BJ (cell line): ENCODE measurements at regions of chr22 and their contacts with region 1.

Region 1: DNA sequence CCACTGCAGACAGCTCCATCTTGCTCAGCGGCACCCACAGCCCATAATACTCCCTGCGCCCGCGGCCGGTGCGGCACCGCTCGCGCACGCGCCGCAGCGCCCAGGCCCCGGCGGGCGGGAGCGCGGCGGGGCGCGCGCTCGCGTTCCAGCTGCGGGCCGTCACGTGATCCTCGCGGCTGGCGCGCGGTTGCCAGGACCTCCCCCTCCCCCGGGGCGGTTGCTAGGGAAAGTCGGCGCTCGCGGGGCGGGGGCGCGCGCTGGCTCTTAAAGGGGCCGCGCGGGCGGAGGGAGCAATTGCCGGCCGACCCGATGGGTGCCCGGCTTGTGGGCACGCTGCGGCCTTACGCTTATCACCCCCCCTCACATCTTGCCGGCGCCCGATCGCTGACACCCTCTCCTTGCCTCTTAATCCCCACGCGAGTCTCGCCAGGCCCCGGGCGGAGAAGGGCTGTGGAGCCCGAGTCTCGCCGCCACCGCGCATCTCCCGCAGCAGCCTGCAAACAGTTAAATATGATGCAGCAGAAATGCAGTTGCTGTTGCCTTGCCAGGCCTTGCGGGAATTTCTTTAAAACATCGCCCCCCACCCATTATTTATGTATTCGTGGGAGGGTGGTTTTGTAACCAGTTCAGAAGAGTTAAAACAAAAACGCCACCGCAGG is at the start of gene CBX6:
- DNase-seq: no peak
- H3K4me3 ChIP-seq: peak within 1 kb of the TSS; percentile 72
- H3K27me3 ChIP-seq: no peaks in the 10 kb centered on the region
- CTCF ChIP-seq: no peak
- polyA plus RNA-seq, gene CBX6: 15.4 and 21.9 TPM in 2 replicates

Region 2: DNA sequence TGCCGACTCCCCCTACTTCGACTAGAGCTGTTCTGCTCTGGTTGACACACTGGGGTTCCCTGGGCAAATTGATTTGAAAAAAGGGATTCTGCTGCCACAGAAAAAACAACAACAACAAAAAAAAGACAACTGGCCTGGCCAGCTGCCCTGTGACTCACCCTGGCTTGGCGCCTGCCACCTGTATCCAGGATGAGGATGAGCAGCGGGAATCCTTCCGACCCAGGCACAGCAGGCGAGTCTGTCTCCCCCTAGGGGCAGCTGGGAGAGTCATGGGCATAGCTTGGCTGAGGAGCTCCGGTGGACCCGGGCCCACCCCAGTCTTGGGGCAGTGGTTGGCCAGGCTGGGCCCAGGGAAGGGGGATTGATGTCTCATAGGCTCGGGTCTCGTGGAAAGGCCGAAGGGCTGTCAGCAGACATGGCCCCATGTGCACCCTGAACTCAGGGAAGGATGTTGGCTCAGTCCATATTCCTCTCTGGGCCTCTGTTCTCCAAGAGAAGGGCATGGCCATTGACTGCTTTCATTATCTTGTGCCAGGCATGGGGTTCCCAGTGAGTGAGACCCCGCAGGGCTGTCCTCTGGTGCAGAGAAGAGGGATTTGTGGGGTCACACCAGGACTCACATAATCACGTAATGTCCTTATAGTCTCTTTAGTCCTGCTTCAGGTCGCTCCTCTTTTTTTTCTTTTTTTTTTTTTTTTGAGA is 106.1 kb before region 1 on chr22:
- CTCF ChIA-PET with region 1: interaction called, 113 read pairs
- POLR2A ChIA-PET with region 1: no interaction called
- DNase-seq: no peak
- H3K4me3 ChIP-seq: no peak overlapping the region
- H3K27me3 ChIP-seq: 0 out of 2 replicates have a peak, but pooled peaks cover 1% of the 10 kb centered on the region
- CTCF ChIP-seq: peak; percentile 96

Region 3: GRCh38 chr22:38921119-38921518 is 48.8 kb after region 1 on chr22:
- CTCF ChIA-PET with region 1: interaction called, 50 read pairs
- POLR2A ChIA-PET with region 1: no interaction called
- DNase-seq: no peak
- H3K4me3 ChIP-seq: no peak overlapping the region
- H3K27me3 ChIP-seq: peaks cover 7% of the 10 kb centered on the region
- CTCF ChIP-seq: no peak

Region 4: GRCh38 chr22:38941488-38941987 is 69.2 kb after region 1 on chr22:
- CTCF ChIA-PET with region 1: interaction called, 10 read pairs
- POLR2A ChIA-PET with region 1: no interaction called
- DNase-seq: no peak
- H3K4me3 ChIP-seq: no peak overlapping the region
- H3K27me3 ChIP-seq: peaks cover 18% of the 10 kb centered on the region
- CTCF ChIP-seq: no peak

Region 5: DNA sequence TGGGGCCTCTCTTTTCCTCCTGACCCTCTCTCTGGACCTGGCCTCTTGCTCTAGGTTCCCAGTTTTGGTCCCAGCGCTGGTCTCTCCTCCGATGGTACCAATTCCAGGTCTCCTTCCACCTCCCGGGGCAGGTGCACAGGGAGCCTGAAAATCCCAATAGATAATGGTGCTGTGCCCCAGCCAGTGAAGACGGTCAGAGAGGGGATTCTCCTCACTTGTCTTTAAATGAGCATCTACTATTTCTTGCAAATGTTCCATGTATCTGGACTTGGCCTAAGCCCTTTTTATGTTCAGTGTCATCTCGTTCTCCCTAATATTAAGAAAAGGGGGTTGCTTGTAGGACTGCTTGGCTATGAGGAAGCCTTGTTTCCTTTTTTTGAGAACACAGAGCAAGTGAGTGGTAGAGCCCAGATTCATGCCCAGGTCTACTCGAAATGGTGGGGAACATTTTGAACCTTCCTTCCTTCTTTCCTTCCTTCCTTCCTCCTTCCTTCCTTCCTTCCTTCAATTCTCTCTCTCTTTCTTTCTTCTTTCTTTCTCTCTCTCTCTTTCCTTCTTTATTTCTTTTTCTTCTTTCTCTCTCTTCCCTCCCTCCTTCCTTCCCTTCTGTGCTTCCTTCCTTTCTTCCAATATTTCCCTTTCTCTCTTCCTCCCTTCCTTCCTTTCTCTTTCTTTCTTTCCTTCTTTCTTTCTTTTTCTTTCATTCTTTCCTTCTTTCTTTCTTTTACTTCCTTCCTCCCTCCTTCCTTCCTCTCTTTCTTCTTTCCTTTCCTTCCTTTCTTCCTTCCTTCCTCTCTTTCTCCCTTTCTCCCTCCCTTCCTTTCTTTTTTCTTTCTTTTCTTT is 85.7 kb after region 1 on chr22:
- CTCF ChIA-PET with region 1: no interaction called
- POLR2A ChIA-PET with region 1: no interaction called
- DNase-seq: no peak
- H3K4me3 ChIP-seq: no peak overlapping the region
- H3K27me3 ChIP-seq: peaks cover 10% of the 10 kb centered on the region
- CTCF ChIP-seq: no peak

Region 6: GRCh38 chr22:38989466-38989865 is 117.2 kb after region 1 on chr22:
- CTCF ChIA-PET with region 1: interaction called, 14 read pairs
- POLR2A ChIA-PET with region 1: no interaction called
- DNase-seq: no peak
- H3K4me3 ChIP-seq: no peak overlapping the region
- H3K27me3 ChIP-seq: no peaks in the 10 kb centered on the region; the same call in 1 of the 2 replicates
- CTCF ChIP-seq: no peak

Region 7: GRCh38 chr22:39003165-39003638 is 130.9 kb after region 1 on chr22:
- CTCF ChIA-PET with region 1: interaction called, 136 read pairs
- POLR2A ChIA-PET with region 1: no interaction called
- DNase-seq: peak; percentile 55
- H3K4me3 ChIP-seq: no peak overlapping the region
- H3K27me3 ChIP-seq: peaks cover 5% of the 10 kb centered on the region
- CTCF ChIP-seq: peak; percentile 76

Region 8: GRCh38 chr22:39135090-39135896 is 263.0 kb after region 1 on chr22:
- CTCF ChIA-PET with region 1: interaction called, 11 read pairs
- POLR2A ChIA-PET with region 1: no interaction called
- DNase-seq: no peak
- H3K4me3 ChIP-seq: no peak overlapping the region
- H3K27me3 ChIP-seq: no peaks in the 10 kb centered on the region
- CTCF ChIP-seq: peak; percentile 68